Dorsolateral prefrontal cortex (tissue), 120 donors: ENCODE measurements at regions of chr1 and their contacts with region 1.

Region 1: GRCh38 chr1:1250786-1251284 is 4.3 kb upstream of the C1QTNF12 start:
- DNase-seq: no peak
- H3K4me3 ChIP-seq: no peak overlapping the region
- H3K27ac ChIP-seq: no peak overlapping the region
- H3K27me3 ChIP-seq: peaks cover 0 to 26% (median 13%) of the 10 kb centered on the region in 45 donors
- CTCF ChIP-seq: no peak

Region 2: DNA sequence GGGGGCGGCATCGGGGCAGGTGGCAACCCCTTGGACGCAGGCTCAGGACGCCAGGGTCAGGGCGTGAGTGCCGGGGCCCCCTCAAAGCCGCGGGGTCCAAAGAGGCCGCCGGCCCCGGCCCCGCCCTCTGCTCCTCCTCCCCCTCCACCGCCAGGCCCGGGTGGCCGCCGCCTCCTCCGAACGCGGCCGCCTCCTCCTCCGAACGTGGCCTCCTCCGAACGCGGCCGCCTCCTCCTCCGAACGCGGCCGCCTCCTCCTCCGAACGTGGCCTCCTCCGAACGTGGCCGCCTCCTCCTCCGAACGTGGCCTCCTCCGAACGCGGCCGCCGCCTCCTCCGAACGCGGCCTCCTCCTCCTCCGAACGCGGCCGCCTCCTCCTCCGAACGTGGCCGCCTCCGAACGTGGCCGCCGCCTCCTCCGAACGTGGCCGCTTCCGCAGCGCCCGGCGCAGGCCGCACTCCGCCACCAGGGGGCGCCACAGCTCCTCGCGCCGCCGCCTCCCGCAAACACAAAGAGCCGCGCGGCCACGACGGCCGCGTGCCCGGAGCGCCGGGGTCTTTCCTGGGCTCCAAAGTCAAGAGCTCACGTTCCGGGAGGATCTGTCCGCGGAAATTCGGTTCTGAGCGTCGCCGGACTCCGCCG is 346.4 kb before region 1 on chr1:
- intact Hi-C with region 1: no loop called
- DNase-seq: peak; percentile 57 to 87 (median 64)
- H3K4me3 ChIP-seq: peak overlapping the region; percentile 21 to 66 (median 54)
- H3K27ac ChIP-seq: peak overlapping the region in 7 of 59 donors; percentile 6 to 58 (median 35)
- H3K27me3 ChIP-seq: peaks cover 0 to 35% (median 0%) of the 10 kb centered on the region in 45 donors
- CTCF ChIP-seq: peak; percentile 47 to 97 (median 84)

Region 3: GRCh38 chr1:1019122-1019999 is 231.5 kb before region 1 on chr1:
- intact Hi-C with region 1: no loop called
- DNase-seq: peak; percentile 34 to 87 (median 72)
- H3K4me3 ChIP-seq: peak overlapping the region in 57 of 59 donors; percentile 42 to 90 (median 70)
- H3K27ac ChIP-seq: peak overlapping the region in 55 of 59 donors; percentile 69 to 97 (median 89)
- H3K27me3 ChIP-seq: no peaks in the 10 kb centered on the region
- CTCF ChIP-seq: peak in 51 of 56 donors; percentile 21 to 75 (median 52)

Region 4: DNA sequence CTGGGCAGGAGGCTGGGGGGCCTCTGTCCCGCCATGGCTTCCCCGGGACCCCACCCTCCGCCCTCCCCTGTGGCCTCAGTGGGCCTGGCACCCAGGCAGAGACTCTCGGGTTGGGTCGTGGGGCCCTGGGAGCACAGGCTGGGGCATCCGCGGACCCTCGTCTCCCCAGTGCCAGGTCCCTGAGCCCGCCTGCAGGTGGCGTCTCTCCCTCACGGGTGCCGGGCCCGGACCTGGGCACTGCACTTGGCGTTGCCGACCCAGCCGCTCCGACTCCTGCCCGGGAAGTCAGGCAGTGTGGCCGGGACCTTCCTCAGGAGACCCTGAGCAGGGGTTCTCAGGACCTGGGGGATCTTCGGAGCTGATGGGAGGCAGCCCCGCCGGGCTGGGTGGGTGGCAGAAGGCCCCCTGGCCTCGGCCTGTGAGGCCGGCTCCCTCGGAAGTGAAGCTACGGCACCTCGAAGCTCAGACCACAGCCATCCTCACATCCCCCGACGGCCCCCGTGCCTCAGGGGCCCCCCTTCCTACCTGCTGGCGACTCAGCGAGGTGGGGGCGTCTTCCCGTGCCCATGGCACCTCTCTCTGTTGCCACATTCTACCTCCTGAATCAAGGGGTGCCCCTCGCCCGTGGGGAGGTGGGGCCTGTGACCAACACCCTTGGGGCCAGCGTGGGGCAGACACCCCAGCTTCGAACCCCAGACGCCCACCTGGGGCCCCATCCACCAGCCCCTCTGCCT is 128.6 kb before region 1 on chr1:
- intact Hi-C with region 1: loop called in 1 of 2 experiments (anchors 5 kb)
- DNase-seq: peak; percentile 69 to 89 (median 78)
- H3K4me3 ChIP-seq: peak overlapping the region in 52 of 59 donors; percentile 1 to 59 (median 32)
- H3K27ac ChIP-seq: peak overlapping the region in 19 of 59 donors; percentile 6 to 67 (median 51)
- H3K27me3 ChIP-seq: no peaks in the 10 kb centered on the region
- CTCF ChIP-seq: peak; percentile 39 to 98 (median 91)